Transverse colon (tissue), 4 donors: ENCODE measurements at regions of chr17 and their contacts with region 1.

Region 1: GRCh38 chr17:5832886-5833285 is 237.3 kb upstream of the WSCD1 start:
- DNase-seq: no peak
- H3K4me3 ChIP-seq: no peak overlapping the region
- H3K27ac ChIP-seq: no peak overlapping the region
- H3K4me1 ChIP-seq: no peaks in the 10 kb centered on the region
- H3K27me3 ChIP-seq: peaks cover 8% of the 10 kb centered on the region
- CTCF ChIP-seq: no peak
- EP300 ChIP-seq: no peak
- POLR2A ChIP-seq: no peak

Region 2: DNA sequence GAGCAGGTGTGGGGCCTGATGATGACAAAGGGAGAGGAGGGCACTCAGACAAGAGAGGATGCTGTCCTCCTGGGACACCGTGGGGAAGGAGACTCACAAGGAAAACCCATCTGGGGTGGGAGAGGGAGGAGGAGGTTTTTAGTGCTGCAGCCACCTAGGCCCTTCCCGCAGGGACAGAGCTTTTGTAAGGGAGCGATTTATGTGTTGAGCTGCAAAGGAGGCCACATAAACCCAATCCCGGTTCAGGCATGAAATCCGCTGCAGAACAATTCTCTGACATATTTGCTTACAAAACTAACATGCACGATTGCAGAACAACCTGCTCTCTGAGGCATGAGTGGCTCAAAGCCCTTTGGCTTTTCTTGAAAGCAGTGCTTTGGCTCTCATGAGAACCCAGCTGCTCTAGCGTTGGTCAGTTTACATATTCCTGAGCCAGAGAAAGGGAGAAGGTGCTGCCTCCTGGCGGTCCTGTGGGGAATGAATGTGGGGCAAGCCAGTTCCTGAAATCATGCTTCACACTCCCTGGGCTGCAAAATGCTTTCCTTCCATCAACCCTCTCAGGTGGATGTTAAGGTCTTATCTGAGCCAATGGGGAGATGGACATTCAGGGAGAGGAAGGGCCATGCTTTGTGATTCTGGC is 126.2 kb before region 1 on chr17:
- in situ Hi-C with region 1: no loop called
- intact Hi-C with region 1: loop called (anchors 10 kb)
- DNase-seq: peak; percentile 63
- H3K4me3 ChIP-seq: no peak overlapping the region
- H3K27ac ChIP-seq: no peak overlapping the region
- H3K4me1 ChIP-seq: no peaks in the 10 kb centered on the region
- H3K27me3 ChIP-seq: peaks cover 8% of the 10 kb centered on the region
- CTCF ChIP-seq: peak; percentile 52 to 67 (median 65)
- EP300 ChIP-seq: no peak
- POLR2A ChIP-seq: no peak

Region 3: GRCh38 chr17:5877948-5878347 is 45.1 kb after region 1 on chr17:
- in situ Hi-C with region 1: no loop called
- intact Hi-C with region 1: loop called (anchors 2 kb)
- DNase-seq: no peak
- H3K4me3 ChIP-seq: no peak overlapping the region
- H3K27ac ChIP-seq: no peak overlapping the region
- H3K4me1 ChIP-seq: no peaks in the 10 kb centered on the region
- H3K27me3 ChIP-seq: no peaks in the 10 kb centered on the region
- CTCF ChIP-seq: no peak
- EP300 ChIP-seq: no peak
- POLR2A ChIP-seq: no peak

Region 4: DNA sequence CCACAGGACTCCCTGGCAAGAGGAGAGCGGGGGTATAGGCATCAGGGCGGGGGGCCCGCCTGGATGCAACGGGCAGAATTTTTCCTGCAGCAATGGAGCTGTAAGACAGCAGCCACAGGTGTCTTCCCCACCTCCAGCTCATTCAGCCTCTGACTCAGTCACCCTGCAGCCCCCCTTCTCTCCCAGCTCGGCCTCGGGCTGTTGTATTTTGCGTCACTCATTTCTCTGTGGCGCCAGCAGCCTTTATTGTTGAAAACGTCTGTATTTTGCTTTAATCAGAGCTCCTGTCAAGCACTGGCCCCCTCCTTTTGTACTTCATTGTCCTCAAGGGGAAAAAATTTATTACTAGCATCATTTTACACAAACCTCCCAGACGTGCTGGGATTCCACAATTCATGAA is 354.9 kb after region 1 on chr17:
- in situ Hi-C with region 1: no loop called
- intact Hi-C with region 1: no loop called
- DNase-seq: no peak
- H3K4me3 ChIP-seq: no peak overlapping the region
- H3K27ac ChIP-seq: no peak overlapping the region
- H3K4me1 ChIP-seq: no peaks in the 10 kb centered on the region
- H3K27me3 ChIP-seq: no peaks in the 10 kb centered on the region
- CTCF ChIP-seq: no peak
- EP300 ChIP-seq: no peak
- POLR2A ChIP-seq: no peak